Activated T-helper 2 cell treated with anti-CD3 and anti-CD28 coated beads, Interferon-gamma antibody, Interleukin-2, Interleukin-4, amounts not matched to agents 10 μg/mL and 5 μg/mL and 100 μg/mL, durations not matched to agents 14 hours and 24 hours and 36 hours (primary cell): ENCODE measurements at regions of chr3 and their contacts with region 1.

Region 1: DNA sequence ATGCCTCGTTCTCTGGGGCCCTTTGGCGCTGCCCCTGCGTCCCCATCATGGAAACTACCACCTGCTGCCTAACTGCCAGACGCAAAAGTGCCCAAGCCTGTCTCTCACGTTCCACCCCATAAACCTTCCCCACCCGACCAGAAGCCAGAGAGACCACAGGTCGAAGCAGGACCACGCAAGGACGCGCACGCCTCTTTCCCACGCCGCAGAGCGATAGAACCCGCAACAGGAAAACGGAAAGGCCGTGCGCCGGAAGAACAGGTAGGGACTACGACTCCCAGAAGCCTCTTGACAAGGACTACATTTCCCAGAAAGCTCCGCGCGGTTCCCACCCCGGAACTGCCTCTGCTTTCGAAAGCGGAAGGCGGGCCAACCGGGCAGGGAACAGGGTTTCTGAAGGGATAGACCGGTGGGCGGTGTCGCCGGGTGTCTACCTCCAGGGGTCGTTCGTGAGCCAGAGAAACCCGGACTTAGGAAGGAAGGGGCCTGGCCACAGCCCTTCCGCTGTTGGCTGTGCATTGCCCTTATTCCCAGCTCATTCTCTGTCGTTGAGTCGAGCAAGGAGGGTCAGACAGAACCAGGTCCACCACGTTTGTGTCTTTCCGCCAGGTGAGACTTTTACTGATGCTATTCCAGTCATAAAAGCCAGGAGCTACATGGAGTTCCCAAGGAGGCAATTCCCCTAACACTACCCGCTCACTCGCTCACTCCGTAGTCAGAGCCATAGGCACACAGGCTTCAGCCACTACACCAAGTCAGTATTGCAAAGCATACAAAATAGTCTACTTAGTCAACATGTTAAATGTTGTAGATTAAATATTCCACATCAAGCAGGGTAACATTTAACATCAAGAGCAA is 56.6 kb upstream of the ZBTB38 start:
- DNase-seq: peak; percentile 98
- H3K4me3 Mint-ChIP-seq: peak overlapping the region; percentile 99
- H3K27ac Mint-ChIP-seq: peak overlapping the region; percentile 99
- H3K4me1 Mint-ChIP-seq: peaks cover 46% of the 10 kb centered on the region
- H3K27me3 Mint-ChIP-seq: no peaks in the 10 kb centered on the region

Region 2: DNA sequence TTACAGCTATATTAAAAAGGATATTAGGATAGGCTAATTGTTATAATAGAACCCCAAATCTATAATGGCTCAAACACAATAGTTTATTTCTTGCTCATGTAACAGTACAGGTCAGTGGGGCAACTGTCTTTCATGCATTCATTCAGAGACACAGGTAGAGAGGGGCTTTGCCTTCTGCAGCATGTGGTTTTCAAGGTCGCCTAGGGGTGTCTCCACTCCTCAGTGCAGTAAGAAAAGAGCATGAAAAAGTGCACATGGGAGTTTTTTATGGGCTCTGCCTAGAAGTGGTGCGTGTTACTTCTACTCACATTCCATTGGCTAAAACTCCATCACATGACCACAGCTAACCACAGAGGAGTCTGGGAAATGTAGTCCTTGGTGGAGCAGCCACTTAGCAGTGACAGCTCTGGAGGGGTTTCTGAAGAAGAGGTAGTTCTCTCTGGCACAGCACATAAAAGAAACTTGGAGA is 58.4 kb after region 1 on chr3:
- intact Hi-C with region 1: loop called (anchors 1 kb)
- DNase-seq: peak; percentile 58
- H3K4me3 Mint-ChIP-seq: no peak overlapping the region
- H3K27ac Mint-ChIP-seq: peak overlapping the region; percentile 40
- H3K4me1 Mint-ChIP-seq: peaks cover 27% of the 10 kb centered on the region
- H3K27me3 Mint-ChIP-seq: no peaks in the 10 kb centered on the region

Region 3: GRCh38 chr3:141441381-141442364 is 129.9 kb after region 1 on chr3:
- intact Hi-C with region 1: loop called (anchors 1 kb)
- DNase-seq: peak; percentile 50
- H3K4me3 Mint-ChIP-seq: no peak overlapping the region
- H3K27ac Mint-ChIP-seq: no peak overlapping the region
- H3K4me1 Mint-ChIP-seq: peaks cover 16% of the 10 kb centered on the region
- H3K27me3 Mint-ChIP-seq: no peaks in the 10 kb centered on the region

Region 4: DNA sequence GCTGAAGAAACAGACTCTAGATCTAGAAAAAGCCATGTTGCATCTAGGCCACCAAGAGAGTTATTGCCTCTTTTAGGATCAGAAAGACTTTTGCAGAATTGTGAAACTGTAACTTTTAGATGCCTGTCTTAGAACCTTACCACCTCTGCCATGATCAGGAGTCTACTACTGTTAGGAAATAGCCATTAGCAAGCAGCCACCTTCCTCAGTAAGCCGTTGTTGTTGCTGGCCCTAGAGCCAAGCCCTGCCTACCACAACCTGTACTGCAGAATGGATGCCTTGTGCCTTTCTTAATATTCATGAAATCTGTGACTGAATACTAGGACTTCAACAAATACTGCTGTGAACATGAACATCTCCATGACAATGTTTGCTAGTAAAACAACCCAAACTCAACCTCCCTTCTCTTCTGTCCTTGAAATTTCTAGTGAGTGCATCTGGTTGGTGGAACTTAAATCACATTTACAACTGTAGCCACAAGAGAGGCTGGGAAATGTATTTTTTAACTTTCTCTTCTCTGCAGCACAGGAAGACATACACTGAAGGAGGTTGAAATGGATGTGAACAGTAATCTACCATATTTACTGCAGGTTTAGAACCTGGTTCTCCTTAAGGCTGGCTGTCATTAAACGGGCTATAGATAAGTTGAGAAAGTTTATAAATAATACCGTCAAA is 195.8 kb after region 1 on chr3:
- intact Hi-C with region 1: no loop called
- DNase-seq: no peak
- H3K4me3 Mint-ChIP-seq: no peak overlapping the region
- H3K27ac Mint-ChIP-seq: no peak overlapping the region
- H3K4me1 Mint-ChIP-seq: peaks cover 31% of the 10 kb centered on the region
- H3K27me3 Mint-ChIP-seq: no peaks in the 10 kb centered on the region

Region 5: DNA sequence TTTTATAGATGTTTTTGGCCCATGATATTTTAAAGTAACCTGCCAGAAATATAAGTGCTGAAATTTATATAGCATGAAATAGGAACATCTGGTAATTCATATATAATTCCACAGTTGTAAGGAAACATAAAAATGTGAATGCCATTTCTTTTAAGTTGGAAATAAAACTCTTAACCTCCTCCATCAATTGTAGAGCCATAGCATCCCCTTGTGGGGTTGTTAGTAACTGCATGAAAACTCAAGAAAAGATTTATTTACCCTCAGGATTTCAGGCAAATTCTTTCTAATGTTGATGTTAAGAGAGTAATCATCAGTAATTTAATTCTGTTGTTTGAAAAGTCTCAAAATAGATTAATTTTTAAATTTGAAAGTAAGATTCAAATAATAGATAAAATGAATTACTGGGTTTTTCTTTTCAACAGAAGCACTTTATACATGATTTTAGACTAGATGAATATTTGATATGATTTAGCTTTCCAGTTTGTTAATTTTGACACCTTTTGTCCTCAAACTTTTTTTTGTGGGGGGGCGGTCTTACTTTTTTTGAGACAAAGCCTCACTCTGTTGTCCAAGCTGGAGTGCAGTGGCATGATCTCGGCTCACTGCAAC is 249.8 kb after region 1 on chr3:
- intact Hi-C with region 1: loop called (anchors 2 kb)
- DNase-seq: no peak
- H3K4me3 Mint-ChIP-seq: no peak overlapping the region
- H3K27ac Mint-ChIP-seq: no peak overlapping the region
- H3K4me1 Mint-ChIP-seq: peaks cover 12% of the 10 kb centered on the region
- H3K27me3 Mint-ChIP-seq: no peaks in the 10 kb centered on the region